Endothelial cell of umbilical vein (primary cell): ENCODE measurements at regions of chr1 and their contacts with region 1.

Region 1: GRCh38 chr1:191255354-191256054 is 777.8 kb upstream of the BRINP3 start:
- DNase-seq: no peak
- H3K4me3 ChIP-seq: no peak overlapping the region
- H3K27ac ChIP-seq: no peak overlapping the region
- H3K4me1 ChIP-seq: no peaks in the 10 kb centered on the region
- H3K27me3 ChIP-seq: no peaks in the 10 kb centered on the region
- CTCF ChIP-seq: no peak
- POLR2A ChIP-seq: no peak

Region 2: DNA sequence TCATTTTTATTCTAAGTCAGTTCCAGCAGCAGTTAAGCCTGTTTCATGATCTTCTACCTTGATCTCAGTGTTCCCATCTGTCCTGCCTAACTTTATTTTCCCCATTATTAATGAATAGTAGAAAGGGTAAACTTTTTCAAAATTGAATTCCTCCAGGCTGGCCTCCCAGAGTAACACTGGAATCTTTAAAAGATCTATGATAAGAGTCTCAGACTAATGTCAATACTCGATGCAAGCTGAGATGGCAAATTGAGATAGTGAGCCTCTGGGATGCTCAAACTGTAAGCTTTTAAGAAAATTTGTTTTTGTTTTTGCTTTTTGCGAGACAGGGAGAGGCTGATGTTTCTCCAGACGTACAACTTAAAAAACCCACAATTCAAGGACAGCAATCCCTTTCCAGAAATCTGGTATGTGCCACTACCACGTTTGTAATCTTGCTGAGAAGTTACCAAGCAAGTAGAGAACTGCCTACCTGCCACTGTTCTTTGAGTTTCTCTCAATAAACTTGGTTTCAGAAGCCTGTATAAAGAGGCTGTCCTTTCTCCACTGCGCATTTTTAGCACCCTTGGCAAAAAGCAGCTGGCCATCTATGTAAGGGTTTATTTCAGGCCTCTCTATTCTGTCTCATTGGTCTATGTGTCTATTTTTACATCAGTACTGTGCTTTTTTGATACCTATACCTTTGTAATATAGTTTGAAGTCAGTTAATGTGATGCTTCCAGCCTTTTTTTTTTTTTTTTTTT is 112.9 kb before region 1 on chr1:
- CTCF ChIA-PET with region 1: no interaction called
- POLR2A ChIA-PET with region 1: interaction called, 10 read pairs
- dilution Hi-C with region 1: no loop called
- intact Hi-C with region 1: no loop called
- DNase-seq: no peak
- H3K4me3 ChIP-seq: no peak overlapping the region
- H3K27ac ChIP-seq: no peak overlapping the region
- H3K4me1 ChIP-seq: peaks cover 3% of the 10 kb centered on the region
- H3K27me3 ChIP-seq: no peaks in the 10 kb centered on the region
- CTCF ChIP-seq: no peak
- POLR2A ChIP-seq: no peak

Region 3: DNA sequence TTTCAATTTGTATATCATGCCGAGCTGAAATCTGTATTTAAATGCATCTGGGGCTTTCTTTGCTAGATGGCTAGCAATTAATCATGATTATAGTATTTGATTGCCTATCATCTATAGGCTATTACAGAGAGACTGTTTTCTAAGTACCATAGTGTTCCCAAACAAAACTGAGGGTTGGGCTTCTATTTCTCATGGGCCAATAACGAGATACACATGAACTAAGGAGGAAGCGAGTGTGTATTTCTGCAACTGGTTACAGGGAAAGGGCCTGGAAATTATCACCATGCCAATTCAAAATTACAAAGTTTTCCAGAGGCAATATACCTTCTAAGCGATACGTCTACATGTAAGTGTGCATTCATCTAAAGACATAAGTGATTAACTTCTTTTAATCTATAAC is 33.3 kb before region 1 on chr1:
- CTCF ChIA-PET with region 1: no interaction called
- POLR2A ChIA-PET with region 1: no interaction called
- dilution Hi-C with region 1: no loop called
- intact Hi-C with region 1: no loop called
- DNase-seq: no peak
- H3K4me3 ChIP-seq: no peak overlapping the region
- H3K27ac ChIP-seq: no peak overlapping the region
- H3K4me1 ChIP-seq: peaks cover 4% of the 10 kb centered on the region
- H3K27me3 ChIP-seq: no peaks in the 10 kb centered on the region
- CTCF ChIP-seq: no peak
- POLR2A ChIP-seq: no peak